ENCODE measurements at regions of chr11 and their contacts with region 1.

Region 1: DNA sequence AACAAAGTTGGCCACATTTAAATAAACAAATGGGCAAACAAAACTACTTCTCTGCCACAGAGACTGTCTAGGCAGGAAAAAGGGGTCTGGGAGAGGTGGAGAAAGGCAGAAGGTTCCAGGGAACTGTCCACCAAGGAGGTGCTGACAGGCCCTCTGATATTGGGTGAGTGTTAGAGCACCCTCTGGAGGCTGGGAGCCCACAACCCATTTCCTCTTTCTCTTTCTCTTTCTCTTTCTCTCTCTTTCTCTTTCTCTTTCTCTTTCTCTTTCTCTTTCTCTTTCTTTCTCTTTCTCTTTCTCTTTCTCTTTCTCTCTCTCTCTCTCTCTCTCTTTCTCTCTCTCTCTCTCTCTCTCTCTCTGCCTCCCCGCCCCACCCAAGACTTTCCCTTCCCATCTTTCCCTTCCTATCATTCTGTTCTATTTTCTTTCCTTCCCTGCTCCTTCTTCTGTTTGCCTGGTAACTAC is 912.8 kb downstream of the DLG2 start:
- DNase-seq: peak; percentile 37

Region 2: DNA sequence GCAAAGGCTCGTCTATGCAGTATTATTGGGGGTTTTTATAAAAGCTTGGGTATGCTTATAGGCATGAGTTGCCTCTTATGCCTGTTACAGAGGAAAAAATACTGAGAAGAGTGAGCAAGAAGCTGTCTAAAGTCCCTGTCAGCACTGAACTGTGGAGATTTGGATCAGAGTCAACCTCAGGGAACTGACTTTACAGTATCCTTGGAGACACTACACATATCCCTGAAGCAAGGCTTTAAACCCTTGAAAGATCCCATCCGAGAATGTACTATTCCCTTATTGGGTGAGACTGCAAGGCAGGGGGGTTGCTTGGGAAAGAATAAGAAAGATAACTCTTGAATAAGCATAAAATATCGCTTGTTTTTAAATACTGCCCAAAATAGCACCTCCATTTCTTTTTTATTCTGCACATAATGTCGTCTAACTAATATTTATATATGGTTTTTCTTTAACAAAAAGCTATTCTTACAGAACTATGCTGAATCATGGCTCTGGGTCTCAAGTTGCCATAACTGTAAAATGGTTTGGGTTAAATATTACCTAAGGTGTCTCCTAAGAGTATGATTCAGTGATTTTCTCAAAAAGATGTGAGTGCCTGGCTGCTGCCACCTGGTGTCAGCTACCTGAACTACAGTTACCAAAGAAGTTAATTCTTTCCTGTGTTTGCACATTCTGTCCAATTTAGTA is 150.0 kb before region 1 on chr11:
- intact Hi-C with region 1: loop called in 1 of 2 experiments (anchors 10 kb)
- DNase-seq: no peak

Region 3: DNA sequence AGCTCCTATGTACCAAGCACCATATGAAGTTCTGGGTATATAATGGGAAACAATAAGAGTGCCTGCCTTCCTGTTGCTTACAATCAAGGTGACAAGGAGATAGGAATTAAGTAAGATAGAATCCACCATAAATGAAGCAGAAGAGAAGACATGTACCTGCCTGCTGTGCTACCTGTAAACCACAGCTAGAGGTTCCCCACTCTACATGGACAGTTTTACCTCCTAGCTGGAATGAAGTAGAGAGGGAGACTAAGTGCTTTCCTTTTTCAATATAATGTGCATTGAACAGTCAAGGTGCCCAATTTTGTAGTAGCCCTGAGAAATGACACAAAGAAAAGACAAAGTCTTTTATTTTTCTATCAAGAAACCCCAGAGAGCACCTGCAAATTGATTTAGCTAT is 71.8 kb before region 1 on chr11:
- intact Hi-C with region 1: loop called in 1 of 2 experiments (anchors 2 kb)
- DNase-seq: no peak

Region 4: DNA sequence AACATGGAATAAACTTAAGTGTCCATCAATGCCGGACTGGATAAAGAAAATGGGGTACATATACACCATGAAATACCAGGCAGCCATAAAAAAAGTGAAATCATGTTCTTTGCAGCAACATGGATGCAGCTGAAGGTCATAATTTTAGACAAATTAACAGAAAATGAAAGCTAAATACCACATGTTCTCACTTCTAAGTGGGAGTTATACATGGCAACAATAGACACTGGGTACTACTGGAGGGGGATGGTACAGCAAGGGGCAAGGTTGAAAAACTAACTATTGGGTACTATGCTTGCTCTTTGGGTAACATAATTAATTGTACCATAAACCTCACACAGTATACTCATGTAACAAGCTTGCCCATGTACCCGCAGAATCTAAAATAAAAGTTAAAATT is 61.2 kb after region 1 on chr11:
- intact Hi-C with region 1: no loop called
- DNase-seq: no peak